T-cell (primary cell): ENCODE measurements at regions of chr14 and their contacts with region 1.

Region 1: GRCh38 chr14:59664741-59665140 is 88.1 kb upstream of the CCDC175 start:
- DNase-seq: no peak
- ATAC-seq: no peak
- H3K4me3 ChIP-seq: no peak overlapping the region
- H3K4me3 Mint-ChIP-seq: no peak overlapping the region
- H3K27ac ChIP-seq: no peak overlapping the region
- H3K27ac Mint-ChIP-seq: no peak overlapping the region
- H3K4me1 ChIP-seq: no peaks in the 10 kb centered on the region
- H3K4me1 Mint-ChIP-seq: no peaks in the 10 kb centered on the region
- H3K27me3 ChIP-seq: no peaks in the 10 kb centered on the region
- H3K27me3 Mint-ChIP-seq: peaks cover 0 to 6% of the 10 kb centered on the region in 2 donors

Region 2: DNA sequence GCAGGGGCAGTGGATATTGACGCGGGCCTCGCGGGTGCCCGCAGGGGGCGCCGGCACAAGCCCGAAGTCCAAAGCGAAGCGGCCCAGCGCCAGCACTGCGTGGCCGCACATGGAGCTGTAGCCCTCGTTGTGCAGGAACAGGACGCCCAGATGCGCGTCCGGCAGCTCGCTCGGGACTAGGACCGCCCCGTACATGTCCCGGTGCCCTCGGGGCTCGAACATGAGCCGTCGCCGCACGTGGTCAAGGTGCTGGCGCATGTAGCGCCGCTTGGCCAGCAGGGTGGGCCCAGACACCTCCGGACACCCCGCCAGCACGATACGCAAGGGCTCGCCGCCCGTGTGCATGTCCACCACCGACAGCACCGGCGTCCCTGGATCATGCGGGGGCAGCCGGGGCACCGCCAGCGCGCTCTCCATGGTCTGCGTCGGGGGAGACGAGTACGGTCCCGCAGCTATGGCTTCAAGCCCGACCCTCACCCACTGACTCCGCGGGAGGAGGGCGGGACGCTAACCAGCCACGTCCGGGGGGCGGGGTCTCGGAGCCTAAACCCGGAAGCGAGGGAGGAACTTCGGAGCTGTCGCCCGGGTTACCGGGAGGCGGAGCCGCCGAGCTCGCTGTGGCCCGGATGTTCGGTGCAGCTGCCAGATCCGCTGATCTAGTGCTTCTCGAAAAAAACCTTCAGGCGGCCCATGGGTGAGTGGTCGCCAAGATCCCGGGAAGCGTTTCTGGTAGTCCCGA is 180.7 kb before region 1 on chr14 and contains the starts of genes JKAMP and L3HYPDH:
- CTCF ChIA-PET with region 1: no interaction called
- POLR2A ChIA-PET with region 1: interaction called in 1 of 2 experiments, 13 read pairs
- DNase-seq: peak; percentile 93 to 99 (median 97)
- ATAC-seq: peak; percentile 95 to 97 (median 96)
- H3K4me3 ChIP-seq: peak within 1 kb of the TSS; percentile 73 to 83
- H3K4me3 Mint-ChIP-seq: peak within 1 kb of the TSS; percentile 89 to 97 (median 95)
- H3K27ac ChIP-seq: peak within 1 kb of the TSS; percentile 44
- H3K27ac Mint-ChIP-seq: peak within 1 kb of the TSS; percentile 89 to 92
- H3K4me1 ChIP-seq: peaks cover 20 to 28% of the 10 kb centered on the region in 2 experiments
- H3K4me1 Mint-ChIP-seq: peaks cover 64 to 71% (median 71%) of the 10 kb centered on the region in 3 donors
- H3K27me3 ChIP-seq: no peaks in the 10 kb centered on the region
- H3K27me3 Mint-ChIP-seq: no peaks in the 10 kb centered on the region
- total RNA-seq, gene JKAMP: 13.8 to 27.0 (median 22.0) TPM
- total RNA-seq, gene L3HYPDH: 19.5 to 53.6 (median 40.5) TPM

Region 3: GRCh38 chr14:60025571-60025970 is 360.8 kb after region 1 on chr14:
- CTCF ChIA-PET with region 1: no interaction called
- POLR2A ChIA-PET with region 1: no interaction called
- DNase-seq: no peak
- ATAC-seq: no peak
- H3K4me3 ChIP-seq: no peak overlapping the region
- H3K4me3 Mint-ChIP-seq: no peak overlapping the region
- H3K27ac ChIP-seq: no peak overlapping the region
- H3K27ac Mint-ChIP-seq: no peak overlapping the region
- H3K4me1 ChIP-seq: no peaks in the 10 kb centered on the region
- H3K4me1 Mint-ChIP-seq: no peaks in the 10 kb centered on the region
- H3K27me3 ChIP-seq: peaks cover 0 to 2% of the 10 kb centered on the region in 2 experiments
- H3K27me3 Mint-ChIP-seq: peaks cover 11% of the 10 kb centered on the region in 2 donors